Upper lobe of right lung (tissue), 1 donor: ENCODE measurements at regions of chr10 and their contacts with region 1.

Region 1: GRCh38 chr10:95601116-95601719 is 40.0 kb upstream of the SORBS1 start:
- DNase-seq: peak; percentile 69
- ATAC-seq: peak; percentile 97
- H3K4me3 ChIP-seq: no peak overlapping the region
- H3K27ac ChIP-seq: no peak overlapping the region
- H3K4me1 ChIP-seq: peaks cover 3% of the 10 kb centered on the region
- H3K27me3 ChIP-seq: no peaks in the 10 kb centered on the region
- CTCF ChIP-seq: peak; percentile 91

Region 2: DNA sequence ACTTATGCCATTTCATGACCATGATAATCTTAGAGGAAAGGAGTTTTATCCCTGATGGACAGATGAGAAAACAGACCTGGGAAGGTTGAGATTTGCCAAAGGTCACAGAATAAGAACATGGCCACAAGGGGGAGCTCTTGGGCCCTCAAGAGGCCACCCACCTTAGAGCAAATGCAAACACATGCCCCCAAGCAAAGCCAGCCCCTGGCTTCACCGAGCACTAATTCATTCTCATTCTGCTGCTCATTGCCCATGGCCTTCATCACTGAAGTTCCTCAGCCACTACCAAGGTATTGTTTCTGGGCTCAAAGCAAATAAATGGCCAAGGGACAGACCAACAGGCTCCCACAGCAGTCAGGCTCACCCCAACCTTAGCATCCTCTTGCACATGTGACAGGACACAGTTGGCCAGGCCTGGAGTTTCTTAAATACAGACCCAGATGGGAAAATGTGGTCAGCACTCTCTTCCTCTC is 354.6 kb before region 1 on chr10:
- intact Hi-C with region 1: loop called (anchors 10 kb)
- DNase-seq: peak; percentile 67
- ATAC-seq: peak; percentile 76
- H3K4me3 ChIP-seq: no peak overlapping the region
- H3K27ac ChIP-seq: no peak overlapping the region
- H3K4me1 ChIP-seq: peaks cover 35% of the 10 kb centered on the region
- H3K27me3 ChIP-seq: no peaks in the 10 kb centered on the region
- CTCF ChIP-seq: peak; percentile 85

Region 3: GRCh38 chr10:95374597-95375209 is 226.5 kb before region 1 on chr10:
- intact Hi-C with region 1: loop called (anchors 5 kb)
- DNase-seq: peak; percentile 78
- ATAC-seq: peak; percentile 100
- H3K4me3 ChIP-seq: no peak overlapping the region
- H3K27ac ChIP-seq: no peak overlapping the region
- H3K4me1 ChIP-seq: peaks cover 3% of the 10 kb centered on the region
- H3K27me3 ChIP-seq: no peaks in the 10 kb centered on the region
- CTCF ChIP-seq: peak; percentile 93

Region 4: DNA sequence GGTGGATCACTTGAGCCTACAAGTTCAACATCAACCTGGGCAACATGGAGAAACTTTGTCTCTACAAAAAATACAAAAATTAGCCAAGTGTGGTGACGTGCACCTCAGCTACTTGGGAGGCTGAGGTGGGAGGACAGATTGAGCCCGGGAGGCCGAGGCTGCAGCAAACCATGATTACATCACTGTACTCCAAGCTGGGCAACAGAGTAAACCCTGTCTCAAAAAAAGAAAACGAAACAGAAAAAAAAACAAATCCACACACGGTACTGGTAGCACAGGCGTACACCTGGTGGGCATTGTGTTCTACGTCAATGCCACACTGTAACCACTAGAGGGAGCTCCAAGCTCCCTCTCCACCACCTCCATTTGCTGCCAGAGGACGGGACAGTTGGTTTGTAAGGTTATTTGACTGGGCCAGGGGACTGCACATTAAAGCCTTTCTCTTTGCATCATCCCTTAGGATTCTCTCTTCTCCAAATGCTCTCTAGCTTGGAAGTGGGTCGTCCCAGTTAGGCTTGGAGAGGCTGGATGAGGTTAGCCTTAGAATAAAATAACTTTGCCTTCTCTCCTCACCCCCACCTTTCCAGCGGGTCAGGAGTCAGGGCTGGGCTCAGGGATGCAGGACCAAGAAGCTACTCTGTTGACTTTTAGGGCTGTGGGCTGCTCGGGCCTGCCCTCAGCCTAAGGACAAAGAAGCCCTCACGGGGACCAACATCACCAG is 170.8 kb before region 1 on chr10:
- intact Hi-C with region 1: loop called (anchors 5 kb)
- DNase-seq: no peak
- ATAC-seq: peak; percentile 93
- H3K4me3 ChIP-seq: no peak overlapping the region
- H3K27ac ChIP-seq: no peak overlapping the region
- H3K4me1 ChIP-seq: peaks cover 14% of the 10 kb centered on the region
- H3K27me3 ChIP-seq: no peaks in the 10 kb centered on the region
- CTCF ChIP-seq: peak; percentile 98